SK-N-SH (cell line): ENCODE measurements at regions of chr9 and their contacts with region 1.

Region 1: DNA sequence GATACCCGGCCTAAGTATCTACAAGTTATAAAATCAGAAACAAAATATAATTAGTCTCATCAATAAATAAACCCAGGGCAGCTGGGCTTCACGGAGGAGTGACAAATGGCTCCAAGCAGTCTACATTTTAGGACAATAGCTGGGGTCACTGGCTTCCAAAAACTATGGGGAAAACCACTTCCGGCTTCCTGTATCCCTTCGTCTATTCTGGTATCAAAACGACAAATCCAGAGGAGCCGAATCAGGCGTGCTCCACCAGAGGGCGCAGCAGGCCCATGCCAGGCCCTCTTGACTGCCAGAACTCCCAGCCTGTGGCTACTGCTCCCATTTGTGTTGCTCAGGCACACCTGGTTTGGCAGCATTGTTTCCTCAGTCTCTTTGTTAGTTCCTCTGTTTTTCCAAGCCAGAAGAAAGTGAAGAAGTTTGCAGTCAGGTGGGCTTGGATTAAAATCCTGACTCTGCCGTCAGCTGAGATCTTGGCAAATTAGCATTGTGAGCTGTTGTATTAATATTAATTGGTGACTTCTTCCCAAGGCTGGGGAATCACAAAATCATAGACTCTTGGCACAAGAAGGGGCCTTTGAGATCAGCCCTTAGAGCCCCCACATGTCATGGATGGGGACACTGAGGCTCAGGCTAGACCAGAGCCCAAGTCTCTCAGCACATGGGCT is 11.6 kb upstream of the RAB14 start:
- DNase-seq: peak; percentile 80
- H3K4me3 ChIP-seq: no peak overlapping the region; a peak in 1 of 4 replicates
- H3K27ac ChIP-seq: no peak overlapping the region
- H3K4me1 ChIP-seq: no peaks in the 10 kb centered on the region
- H3K27me3 ChIP-seq: no peaks in the 10 kb centered on the region
- CTCF ChIP-seq: peak; percentile 96
- EP300 ChIP-seq: no peak
- RAD21 ChIP-seq: peak; percentile 94

Region 2: DNA sequence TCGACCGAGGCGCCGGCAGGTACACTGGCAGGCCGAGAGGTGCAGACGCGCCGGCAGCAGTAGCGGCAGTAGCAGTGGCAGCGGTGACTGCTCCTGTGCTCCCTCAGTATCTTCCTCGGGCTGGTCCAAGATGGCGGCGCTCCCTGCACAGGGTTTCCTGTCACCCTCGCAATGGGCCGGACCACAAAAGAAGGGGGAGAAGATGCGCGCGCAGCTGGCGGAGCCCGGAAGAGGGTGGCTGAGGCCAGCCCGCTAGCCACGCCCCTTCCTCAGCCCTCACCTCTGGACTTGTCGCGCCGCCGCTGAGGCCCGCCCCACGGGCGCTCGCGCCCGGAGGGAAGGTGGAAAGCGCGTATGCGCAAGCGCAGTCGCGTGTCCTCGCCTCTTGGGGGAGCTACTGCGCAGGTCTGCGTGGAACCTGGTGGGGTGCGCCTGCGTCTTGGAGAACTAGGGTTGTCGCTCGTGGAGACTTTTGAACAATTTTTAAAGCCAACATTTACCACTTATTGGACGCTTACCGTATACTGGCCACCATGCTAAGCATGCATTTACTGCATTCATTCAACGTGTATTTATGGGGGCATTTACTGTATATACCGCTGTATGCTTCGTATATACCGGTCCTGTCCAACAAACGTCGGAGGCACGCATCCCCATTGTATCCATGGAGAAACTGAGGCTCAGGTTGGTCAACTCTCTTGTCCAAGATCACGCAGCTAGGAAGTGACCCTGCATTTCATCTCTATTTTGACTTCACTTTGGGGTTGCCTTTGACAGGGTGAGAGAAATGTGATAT is 11.3 kb before region 1 on chr9 and contains the start of gene RAB14:
- CTCF ChIA-PET with region 1: interaction called, 25 read pairs
- POLR2A ChIA-PET with region 1: no interaction called
- DNase-seq: peak; percentile 100
- H3K4me3 ChIP-seq: peak within 1 kb of the TSS; percentile 89 to 96
- H3K27ac ChIP-seq: peak within 1 kb of the TSS; percentile 71 to 95; a peak in 3 of 4 replicates
- H3K4me1 ChIP-seq: peaks cover 7 to 32% of the 10 kb centered on the region in 2 experiments; a peak in 3 of 4 replicates
- H3K27me3 ChIP-seq: no peaks in the 10 kb centered on the region
- CTCF ChIP-seq: peak; percentile 56
- EP300 ChIP-seq: no peak
- RAD21 ChIP-seq: peak; percentile 11; the same call in 1 of the 2 replicates
- polyA plus RNA-seq, gene RAB14: 12.9 and 17.4 TPM in 2 replicates

Region 3: GRCh38 chr9:121246821-121247561 is 33.7 kb after region 1 on chr9:
- CTCF ChIA-PET with region 1: interaction called, 13 read pairs
- POLR2A ChIA-PET with region 1: no interaction called
- DNase-seq: no peak
- H3K4me3 ChIP-seq: no peak overlapping the region
- H3K27ac ChIP-seq: no peak overlapping the region
- H3K4me1 ChIP-seq: no peaks in the 10 kb centered on the region
- H3K27me3 ChIP-seq: no peaks in the 10 kb centered on the region
- CTCF ChIP-seq: no peak
- EP300 ChIP-seq: no peak
- RAD21 ChIP-seq: no peak

Region 4: GRCh38 chr9:121267689-121268597 is 54.7 kb after region 1 on chr9 and contains the start of gene GSN:
- CTCF ChIA-PET with region 1: interaction called, 15 read pairs
- POLR2A ChIA-PET with region 1: no interaction called
- DNase-seq: peak; percentile 95
- H3K4me3 ChIP-seq: peak within 1 kb of the TSS; percentile 72 to 92
- H3K27ac ChIP-seq: peak within 1 kb of the TSS; percentile 47 to 71; a peak in 3 of 4 replicates
- H3K4me1 ChIP-seq: peaks cover 18 to 37% of the 10 kb centered on the region in 2 experiments; a peak in 3 of 4 replicates
- H3K27me3 ChIP-seq: no peaks in the 10 kb centered on the region
- CTCF ChIP-seq: peak; percentile 21; the same call in 1 of the 2 replicates
- EP300 ChIP-seq: no peak
- RAD21 ChIP-seq: no peak
- polyA plus RNA-seq, gene GSN: 168 and 172 TPM in 2 replicates

Region 5: GRCh38 chr9:121362813-121363621 is 149.7 kb after region 1 on chr9:
- CTCF ChIA-PET with region 1: no interaction called
- POLR2A ChIA-PET with region 1: no interaction called
- DNase-seq: no peak
- H3K4me3 ChIP-seq: no peak overlapping the region
- H3K27ac ChIP-seq: peak overlapping the region; percentile 82 to 92
- H3K4me1 ChIP-seq: peaks cover 20 to 68% of the 10 kb centered on the region in 2 experiments; a peak in 3 of 4 replicates
- H3K27me3 ChIP-seq: no peaks in the 10 kb centered on the region
- CTCF ChIP-seq: no peak
- EP300 ChIP-seq: peak; percentile 40 to 81
- RAD21 ChIP-seq: no peak

Region 6: GRCh38 chr9:121399883-121400607 is 186.8 kb after region 1 on chr9:
- CTCF ChIA-PET with region 1: interaction called, 64 read pairs
- POLR2A ChIA-PET with region 1: no interaction called
- DNase-seq: peak; percentile 37
- H3K4me3 ChIP-seq: peak overlapping the region in 1 of 2 experiments; percentile 28; a peak in 1 of 4 replicates
- H3K27ac ChIP-seq: peak overlapping the region in 1 of 2 experiments; percentile 74; a peak in 1 of 4 replicates
- H3K4me1 ChIP-seq: peaks cover 0 to 20% of the 10 kb centered on the region in 2 experiments; a peak in 1 of 4 replicates
- H3K27me3 ChIP-seq: no peaks in the 10 kb centered on the region
- CTCF ChIP-seq: peak; percentile 74
- EP300 ChIP-seq: no peak
- RAD21 ChIP-seq: peak; percentile 89